BJ (cell line): ENCODE measurements at regions of chr16 and their contacts with region 1.

Region 1: GRCh38 chr16:30902029-30902972 is 5.9 kb downstream of the CTF1 start:
- DNase-seq: no peak
- H3K4me3 ChIP-seq: peak overlapping the region; percentile 34
- H3K27me3 ChIP-seq: no peaks in the 10 kb centered on the region
- CTCF ChIP-seq: no peak

Region 2: GRCh38 chr16:30472328-30472942 is 429.9 kb before region 1 on chr16 and contains the start of gene ITGAL:
- CTCF ChIA-PET with region 1: no interaction called
- POLR2A ChIA-PET with region 1: no interaction called
- DNase-seq: no peak
- H3K4me3 ChIP-seq: no peak within 1 kb of the TSS
- H3K27me3 ChIP-seq: peaks cover 9% of the 10 kb centered on the region
- CTCF ChIP-seq: no peak
- polyA plus RNA-seq, gene ITGAL: 0.06 TPM in 2 replicates

Region 3: DNA sequence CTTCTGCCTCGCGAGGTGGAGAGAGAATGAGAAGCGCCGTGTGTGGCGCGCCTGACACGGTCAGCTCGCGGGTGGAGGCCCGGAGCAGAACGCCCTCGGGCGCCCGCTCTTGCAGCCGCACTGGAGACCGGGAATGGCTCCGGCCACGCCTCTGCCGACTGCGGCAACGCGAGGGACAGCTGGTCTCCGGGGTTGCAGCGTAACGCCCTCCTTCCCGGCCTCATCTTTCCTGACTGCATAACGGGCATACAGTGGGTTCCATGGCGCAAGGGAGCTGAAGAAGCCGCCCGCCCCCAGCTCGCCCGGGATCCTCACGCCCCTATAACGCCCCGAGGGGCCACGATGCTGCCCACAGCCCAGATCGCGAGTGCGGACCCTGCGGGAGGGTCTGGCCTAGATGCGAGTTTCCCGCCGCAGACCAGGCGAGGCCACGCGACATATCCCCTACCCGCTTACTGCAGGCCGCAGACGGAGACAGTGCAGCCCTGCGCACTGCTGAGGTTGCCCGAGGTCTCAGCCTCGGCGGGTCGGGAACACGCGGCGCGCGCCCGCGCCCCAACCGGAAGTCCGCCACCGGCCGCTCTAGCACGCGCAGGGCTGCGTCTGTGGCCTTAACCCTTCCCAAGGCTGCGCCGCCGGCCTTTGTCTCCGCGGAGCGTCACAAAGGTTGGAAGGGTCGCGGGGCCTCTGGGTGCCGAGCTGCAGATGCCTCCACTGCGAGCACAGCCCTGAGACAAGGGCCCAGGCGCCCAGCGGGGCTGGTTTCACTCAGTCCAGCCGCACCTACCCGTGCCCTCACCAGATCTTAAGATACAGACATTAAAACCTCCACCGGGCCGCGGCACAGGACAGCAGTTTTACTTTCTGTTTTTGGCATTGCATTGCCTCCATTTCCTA is 27.2 kb before region 1 on chr16:
- CTCF ChIA-PET with region 1: interaction called, 12 read pairs
- POLR2A ChIA-PET with region 1: interaction called, 4 read pairs
- DNase-seq: peak; percentile 39
- H3K4me3 ChIP-seq: peak overlapping the region; percentile 71
- H3K27me3 ChIP-seq: no peaks in the 10 kb centered on the region; the same call in 1 of the 2 replicates
- CTCF ChIP-seq: no peak

Region 4: GRCh38 chr16:30914830-30915229 is 12.5 kb after region 1 on chr16:
- CTCF ChIA-PET with region 1: interaction called, 13 read pairs
- POLR2A ChIA-PET with region 1: no interaction called
- DNase-seq: no peak
- H3K4me3 ChIP-seq: no peak overlapping the region
- H3K27me3 ChIP-seq: no peaks in the 10 kb centered on the region
- CTCF ChIP-seq: no peak